Activated T-helper 1 cell treated with anti-CD3 and anti-CD28 coated beads, Interleukin-12 subunit alpha, Interleukin-12 subunit beta, Interleukin-2, Interleukin-4 antibody, amounts not matched to agents 30 ng/mL and 10 ng/mL and 1 ng/mL, durations not matched to agents 14 hours and 24 hours and 36 hours (primary cell): ENCODE measurements at regions of chr1 and their contacts with region 1.

Region 1: DNA sequence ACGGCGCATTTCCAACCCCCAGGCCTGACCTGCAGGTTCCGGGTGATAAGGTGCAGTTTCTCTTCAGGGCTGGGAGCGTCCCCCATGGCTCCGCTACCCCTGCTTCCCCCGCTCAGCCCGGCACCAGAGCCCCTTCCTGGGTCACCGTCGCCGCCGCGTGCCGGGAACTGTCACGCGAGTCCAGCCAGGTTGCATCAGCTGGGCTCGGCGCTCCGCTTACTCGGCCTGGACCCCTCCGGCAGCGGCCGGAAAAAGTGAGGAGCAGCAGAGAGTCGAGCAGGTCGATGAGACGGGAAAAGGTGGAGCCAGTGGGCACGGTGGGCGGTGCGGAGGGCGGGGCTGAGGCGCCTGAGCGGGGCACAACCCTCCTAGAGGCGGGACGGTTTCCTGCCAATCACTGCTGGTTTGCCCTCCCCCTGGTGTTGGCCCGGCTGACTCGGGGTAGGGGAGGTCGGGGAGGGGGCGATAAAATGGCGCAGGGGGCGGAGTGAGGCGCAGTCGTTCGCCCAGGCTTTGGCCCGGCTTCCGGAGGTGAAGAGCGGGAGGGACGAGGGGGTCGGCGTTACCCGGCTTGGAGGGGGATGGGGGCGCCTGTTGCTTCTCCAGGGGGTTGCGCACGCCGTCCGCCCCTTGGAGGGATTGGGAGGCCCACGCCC is at the starts of genes S100PBP and YARS1:
- DNase-seq: peak; percentile 100
- H3K4me3 Mint-ChIP-seq: peak within 1 kb of the TSS; percentile 97
- H3K27ac Mint-ChIP-seq: peak within 1 kb of the TSS; percentile 97
- H3K4me1 Mint-ChIP-seq: peaks cover 53% of the 10 kb centered on the region
- H3K27me3 Mint-ChIP-seq: no peaks in the 10 kb centered on the region
- total RNA-seq, gene S100PBP: 48.8 and 55.8 TPM in 2 replicates
- total RNA-seq, gene YARS1: 205 and 225 TPM in 2 replicates

Region 2: DNA sequence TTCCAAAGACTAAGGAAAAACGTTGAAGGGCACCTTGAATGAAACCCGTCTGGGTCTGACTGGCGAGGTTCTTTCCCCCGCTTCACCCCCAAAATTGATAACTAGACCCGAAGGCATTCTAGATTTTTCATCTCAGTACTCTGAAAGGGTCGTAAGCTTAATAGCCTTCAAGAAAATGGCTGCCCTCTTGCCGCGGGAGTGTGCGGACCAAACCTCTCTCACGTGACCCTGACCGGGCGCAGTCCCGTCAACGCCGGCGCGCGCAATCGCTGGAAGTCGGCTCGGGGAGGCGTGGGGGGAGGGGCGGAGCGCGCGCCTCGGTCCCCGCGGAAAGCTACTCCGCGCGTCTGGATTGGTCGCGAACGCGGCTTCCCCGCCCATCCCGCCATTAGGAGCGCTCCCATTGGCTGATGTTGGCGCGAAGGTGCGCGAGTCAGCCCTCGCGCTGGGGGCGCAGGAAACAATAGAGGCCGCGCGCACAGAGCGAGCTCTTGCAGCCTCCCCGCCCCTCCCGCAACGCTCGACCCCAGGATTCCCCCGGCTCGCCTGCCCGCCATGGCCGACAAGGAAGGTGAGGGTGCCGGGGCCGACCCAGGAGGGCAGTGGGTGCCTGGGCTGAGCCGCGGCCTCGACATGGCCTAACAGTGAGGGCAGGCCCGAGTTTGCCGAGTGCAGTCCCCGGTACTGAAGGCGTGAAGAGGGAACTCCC is 166.4 kb before region 1 on chr1 and contains the start of gene RBBP4:
- intact Hi-C with region 1: loop called (anchors 1 kb)
- DNase-seq: peak; percentile 99
- H3K4me3 Mint-ChIP-seq: peak within 1 kb of the TSS; percentile 94
- H3K27ac Mint-ChIP-seq: peak within 1 kb of the TSS; percentile 100
- H3K4me1 Mint-ChIP-seq: peaks cover 55% of the 10 kb centered on the region
- H3K27me3 Mint-ChIP-seq: peaks cover 2% of the 10 kb centered on the region
- total RNA-seq, gene RBBP4: 315 TPM in 2 replicates

Region 3: DNA sequence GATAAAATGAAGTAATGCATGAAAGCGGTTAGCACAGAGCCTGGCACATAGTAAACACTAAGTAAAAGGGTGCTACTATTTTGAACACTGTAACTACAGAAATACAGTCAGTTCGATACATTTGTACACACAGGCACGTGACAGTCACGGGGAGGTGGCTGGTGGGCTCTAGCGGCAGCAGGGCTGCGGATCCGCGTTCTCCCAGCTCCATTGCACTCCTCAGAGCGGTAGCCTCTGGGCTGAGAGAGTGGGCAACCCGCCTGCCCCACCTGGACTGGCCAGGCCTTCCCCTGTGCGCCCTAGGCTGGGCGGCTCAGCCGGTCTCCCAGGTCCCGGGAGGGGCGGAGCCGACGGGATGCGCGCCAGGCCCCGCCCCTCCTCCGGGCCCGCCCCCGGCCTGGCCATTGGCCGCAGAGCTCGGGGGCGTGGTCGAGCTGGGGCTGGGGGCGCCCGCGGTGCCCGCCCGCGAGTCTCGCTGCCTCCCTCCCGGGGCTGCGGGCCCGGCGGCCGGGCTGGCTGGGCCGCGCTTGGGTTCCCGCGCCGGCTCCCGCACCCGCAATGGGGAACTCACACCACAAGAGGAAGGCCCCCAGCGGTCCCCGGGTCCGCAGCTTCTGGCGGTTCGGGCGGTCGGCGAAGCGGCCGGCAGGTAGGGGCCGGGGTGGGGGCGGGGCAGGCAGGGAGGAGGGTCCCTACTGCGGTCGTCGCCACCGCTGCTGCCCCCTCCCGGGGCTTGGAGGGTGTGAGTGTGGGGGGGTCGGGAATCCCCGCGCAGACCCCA is 63.6 kb before region 1 on chr1:
- intact Hi-C with region 1: loop called (anchors 5 kb)
- DNase-seq: peak; percentile 66
- H3K4me3 Mint-ChIP-seq: peak overlapping the region; percentile 80
- H3K27ac Mint-ChIP-seq: peak overlapping the region; percentile 59
- H3K4me1 Mint-ChIP-seq: peaks cover 11% of the 10 kb centered on the region
- H3K27me3 Mint-ChIP-seq: peaks cover 46% of the 10 kb centered on the region

Region 4: GRCh38 chr1:32870615-32871363 is 53.5 kb after region 1 on chr1 and contains the start of gene FNDC5:
- intact Hi-C with region 1: loop called (anchors 5 kb)
- DNase-seq: no peak
- H3K4me3 Mint-ChIP-seq: peak within 1 kb of the TSS; percentile 56
- H3K27ac Mint-ChIP-seq: no peak within 1 kb of the TSS
- H3K4me1 Mint-ChIP-seq: peaks cover 6% of the 10 kb centered on the region
- H3K27me3 Mint-ChIP-seq: peaks cover 48% of the 10 kb centered on the region
- total RNA-seq, gene FNDC5: not detected in 2 replicates

Region 5: GRCh38 chr1:32981003-32981901 is 164.0 kb after region 1 on chr1:
- intact Hi-C with region 1: loop called (anchors 5 kb)
- DNase-seq: peak; percentile 65
- H3K4me3 Mint-ChIP-seq: peak overlapping the region; percentile 60
- H3K27ac Mint-ChIP-seq: peak overlapping the region; percentile 85
- H3K4me1 Mint-ChIP-seq: peaks cover 81% of the 10 kb centered on the region
- H3K27me3 Mint-ChIP-seq: no peaks in the 10 kb centered on the region

Region 6: GRCh38 chr1:33080885-33081553 is 263.7 kb after region 1 on chr1 and contains the start of gene AZIN2:
- intact Hi-C with region 1: loop called (anchors 1 kb)
- DNase-seq: peak; percentile 93
- H3K4me3 Mint-ChIP-seq: peak within 1 kb of the TSS; percentile 84
- H3K27ac Mint-ChIP-seq: no peak within 1 kb of the TSS
- H3K4me1 Mint-ChIP-seq: peaks cover 17% of the 10 kb centered on the region
- H3K27me3 Mint-ChIP-seq: peaks cover 36% of the 10 kb centered on the region
- total RNA-seq, gene AZIN2: 1.1 and 1.4 TPM in 2 replicates